Aorta (tissue), 5 donors: ENCODE measurements at regions of chr12 and their contacts with region 1.

Region 1: DNA sequence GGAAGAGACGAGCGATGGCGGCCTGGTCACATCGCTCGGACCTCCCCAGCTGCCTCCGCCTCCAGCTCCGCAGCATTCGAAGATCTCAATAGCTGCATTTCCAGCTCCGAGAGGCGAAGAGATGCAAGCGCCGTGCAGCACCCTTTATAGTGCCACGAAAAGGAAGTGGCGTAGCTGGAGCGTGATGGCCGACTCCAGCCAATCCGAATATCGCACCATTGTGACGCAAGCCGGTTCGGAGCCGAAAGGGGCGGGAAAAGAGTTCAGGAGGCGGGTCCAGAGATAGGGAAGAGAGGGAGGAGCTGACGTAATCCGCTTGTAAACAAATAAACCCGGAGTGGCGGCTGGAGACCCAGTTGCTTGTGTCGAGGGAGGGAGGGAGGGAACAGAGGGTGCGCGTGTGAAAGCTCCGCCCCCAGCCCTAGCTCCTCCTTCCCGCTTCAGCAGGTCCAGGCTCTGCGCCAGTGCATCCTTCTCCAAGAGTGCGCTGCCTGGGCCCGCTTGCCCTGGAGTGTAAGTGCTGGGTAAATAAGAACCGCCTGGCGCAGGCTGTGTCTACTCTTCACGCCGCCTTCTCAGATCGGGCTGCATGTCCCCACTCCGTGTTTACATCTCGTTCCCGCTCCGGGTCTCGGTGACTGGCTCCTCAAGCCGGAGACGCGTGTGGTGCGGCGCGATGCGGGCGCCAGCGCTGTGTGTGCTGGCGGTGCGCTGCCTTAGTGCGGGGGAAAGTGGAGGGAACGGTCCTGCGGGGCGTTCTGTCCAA is at the start of gene BTG1:
- DNase-seq: peak; percentile 98 to 99
- ATAC-seq: peak; percentile 94
- H3K4me3 ChIP-seq: peak within 1 kb of the TSS; percentile 98
- H3K27ac ChIP-seq: peak within 1 kb of the TSS; percentile 91 to 99
- H3K4me1 ChIP-seq: no peaks in the 10 kb centered on the region
- H3K27me3 ChIP-seq: no peaks in the 10 kb centered on the region
- total RNA-seq, gene BTG1: 81.0 to 86.9 TPM

Region 2: GRCh38 chr12:91382081-91382543 is 763.8 kb before region 1 on chr12:
- intact Hi-C with region 1: loop called (anchors 5 kb)
- DNase-seq: peak; percentile 86 to 92
- ATAC-seq: peak; percentile 89
- H3K4me3 ChIP-seq: peak overlapping the region; percentile 72 to 83
- H3K27ac ChIP-seq: no peak overlapping the region
- H3K4me1 ChIP-seq: no peaks in the 10 kb centered on the region
- H3K27me3 ChIP-seq: no peaks in the 10 kb centered on the region

Region 3: GRCh38 chr12:91811481-91812287 is 334.2 kb before region 1 on chr12:
- intact Hi-C with region 1: loop called in 1 of 2 experiments (anchors 5 kb)
- DNase-seq: peak; percentile 77 to 88
- ATAC-seq: peak; percentile 78
- H3K4me3 ChIP-seq: no peak overlapping the region
- H3K27ac ChIP-seq: no peak overlapping the region
- H3K4me1 ChIP-seq: no peaks in the 10 kb centered on the region
- H3K27me3 ChIP-seq: no peaks in the 10 kb centered on the region

Region 4: GRCh38 chr12:91990525-91990924 is 155.4 kb before region 1 on chr12:
- intact Hi-C with region 1: loop called (anchors 1 to 5 kb)
- DNase-seq: no peak
- ATAC-seq: peak; percentile 70
- H3K4me3 ChIP-seq: no peak overlapping the region
- H3K27ac ChIP-seq: peak overlapping the region; percentile 18 to 64
- H3K4me1 ChIP-seq: peaks cover 6 to 14% of the 10 kb centered on the region in 2 donors
- H3K27me3 ChIP-seq: no peaks in the 10 kb centered on the region

Region 5: DNA sequence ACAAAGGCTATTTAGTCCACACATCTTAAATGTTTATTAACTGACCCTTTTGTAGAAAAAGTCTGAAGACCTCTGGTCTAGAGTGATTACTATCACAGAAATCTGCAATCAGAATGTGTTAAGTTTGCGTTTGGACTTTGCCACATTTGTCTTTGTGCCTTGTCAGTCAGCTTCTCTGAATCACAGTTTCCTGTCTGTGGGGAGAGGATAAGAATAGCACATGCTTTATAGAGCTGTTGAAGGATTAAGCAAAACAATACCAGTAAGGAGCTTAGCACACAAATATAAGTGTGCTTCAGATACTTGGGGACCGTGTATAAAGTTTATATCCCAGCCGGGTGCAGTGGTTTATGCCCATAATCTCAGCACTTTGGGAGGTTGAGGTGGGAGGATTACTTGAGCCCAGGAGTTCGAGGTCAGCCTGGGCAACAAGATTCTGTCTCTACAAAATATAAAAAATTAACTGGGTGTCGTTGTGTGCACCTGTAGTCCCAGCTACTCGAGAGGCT is 62.8 kb after region 1 on chr12:
- intact Hi-C with region 1: loop called in 1 of 2 experiments (anchors 5 kb)
- DNase-seq: no peak
- ATAC-seq: peak; percentile 72
- H3K4me3 ChIP-seq: no peak overlapping the region
- H3K27ac ChIP-seq: no peak overlapping the region
- H3K4me1 ChIP-seq: no peaks in the 10 kb centered on the region
- H3K27me3 ChIP-seq: no peaks in the 10 kb centered on the region

Region 6: DNA sequence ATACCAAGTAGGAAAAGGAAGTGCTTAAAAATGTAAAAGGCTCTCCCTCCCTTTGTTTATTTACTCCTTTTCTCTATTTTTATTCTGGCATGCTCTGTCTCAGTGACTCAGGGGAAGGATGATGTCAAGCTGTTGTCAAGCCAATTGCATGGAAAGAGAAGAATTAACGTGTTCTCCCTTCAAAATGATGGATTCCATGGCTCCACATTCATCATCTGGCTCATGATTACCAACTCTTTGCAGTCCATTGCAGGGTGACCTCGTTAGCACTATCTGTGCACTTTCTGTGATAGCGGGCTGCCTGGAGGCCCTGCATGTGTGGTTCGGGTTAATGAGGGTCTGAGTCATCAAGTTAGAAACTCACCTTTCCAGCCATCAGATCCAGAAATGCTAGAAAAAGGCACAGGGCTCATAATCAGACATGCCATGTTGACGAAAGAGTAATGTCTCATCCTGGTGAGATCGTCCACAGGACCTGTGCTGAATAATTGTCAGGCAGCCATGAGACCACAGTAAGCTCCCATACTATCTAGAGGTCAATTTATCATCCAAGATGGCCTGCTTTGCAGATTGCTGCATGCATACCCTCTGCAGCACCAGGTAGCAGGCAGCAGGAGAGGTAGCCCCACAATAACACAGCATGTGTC is 78.9 kb after region 1 on chr12:
- intact Hi-C with region 1: no loop called
- DNase-seq: no peak
- ATAC-seq: no peak
- H3K4me3 ChIP-seq: no peak overlapping the region
- H3K27ac ChIP-seq: no peak overlapping the region
- H3K4me1 ChIP-seq: peaks cover 0 to 2% of the 10 kb centered on the region in 2 donors
- H3K27me3 ChIP-seq: no peaks in the 10 kb centered on the region

Region 7: GRCh38 chr12:92561543-92561899 is 415.6 kb after region 1 on chr12:
- intact Hi-C with region 1: loop called (anchors 5 kb)
- DNase-seq: peak in 1 of 2 donors; percentile 53
- ATAC-seq: peak; percentile 82
- H3K4me3 ChIP-seq: no peak overlapping the region
- H3K27ac ChIP-seq: no peak overlapping the region
- H3K4me1 ChIP-seq: peaks cover 2 to 13% of the 10 kb centered on the region in 2 donors
- H3K27me3 ChIP-seq: no peaks in the 10 kb centered on the region